A549 (cell line): ENCODE measurements at regions of chr12 and their contacts with region 1.

Region 1: GRCh38 chr12:10562306-10562933 is 51.0 kb downstream of the MAGOHB start:
- DNase-seq: peak; percentile 13 to 53
- ATAC-seq: 0 out of 6 replicates have a peak, but pooled peaks of 1 of the 2 experiments have one; percentile 33
- H3K4me3 ChIP-seq: no peak overlapping the region
- H3K27ac ChIP-seq: no peak overlapping the region
- H3K4me1 ChIP-seq: 0 out of 3 replicates have a peak, but pooled peaks cover 3% of the 10 kb centered on the region
- CTCF ChIP-seq: peak; percentile 92
- EP300 ChIP-seq: no peak
- POLR2A ChIP-seq: no peak
- RAD21 ChIP-seq: peak; percentile 89 to 91

Region 2: GRCh38 chr12:10235761-10236631 is 326.4 kb before region 1 on chr12:
- CTCF ChIA-PET with region 1: interaction called, 11 read pairs
- POLR2A ChIA-PET with region 1: no interaction called
- DNase-seq: peak; percentile 38 to 56
- ATAC-seq: peak; percentile 77 to 88; a peak in 5 of 6 replicates
- H3K4me3 ChIP-seq: no peak overlapping the region
- H3K27ac ChIP-seq: no peak overlapping the region
- H3K4me1 ChIP-seq: no peaks in the 10 kb centered on the region
- CTCF ChIP-seq: peak; percentile 90
- EP300 ChIP-seq: no peak
- POLR2A ChIP-seq: no peak
- RAD21 ChIP-seq: peak; percentile 89 to 93

Region 3: DNA sequence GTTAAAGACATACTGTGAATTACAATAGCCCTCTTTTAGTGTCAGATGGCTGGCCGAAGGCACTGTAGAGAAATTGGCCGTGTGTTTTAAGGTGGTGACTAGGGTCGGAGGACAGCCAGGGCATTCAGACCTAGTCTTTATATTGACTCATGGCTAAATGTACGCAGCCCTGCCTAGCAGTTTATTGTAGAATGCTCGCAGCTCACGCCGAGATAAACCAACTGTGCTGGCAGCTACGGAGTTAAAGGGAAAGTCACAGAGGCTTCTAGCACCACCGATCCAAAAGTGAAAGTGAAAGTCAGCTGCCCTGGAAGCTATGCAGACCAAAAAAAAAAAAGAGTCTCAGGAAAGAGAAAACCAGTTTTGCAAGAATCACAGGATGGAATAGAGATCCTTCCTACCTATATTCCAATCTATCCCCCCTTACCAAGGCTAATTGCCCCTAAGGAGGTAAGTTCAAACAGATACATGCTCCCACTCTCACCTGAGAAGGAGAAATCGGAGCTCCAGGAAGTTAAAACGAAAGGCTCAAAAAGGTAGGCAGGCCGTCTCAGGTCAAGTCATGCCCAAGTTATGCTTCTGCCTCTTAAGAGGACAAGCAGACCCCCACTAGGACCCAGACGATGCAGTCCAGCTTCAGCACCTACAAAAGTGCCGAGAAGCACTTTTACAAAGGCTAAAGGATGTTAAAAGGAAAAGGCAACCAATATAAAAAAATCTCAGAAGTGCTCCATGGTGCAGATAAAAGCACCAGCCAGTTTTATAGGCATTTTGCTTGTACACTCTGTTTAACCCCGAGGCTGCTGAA is 197.4 kb before region 1 on chr12:
- CTCF ChIA-PET with region 1: interaction called, 25 read pairs
- POLR2A ChIA-PET with region 1: interaction called, 3 read pairs
- DNase-seq: peak; percentile 35 to 53
- ATAC-seq: peak; percentile 68 to 78
- H3K4me3 ChIP-seq: peak overlapping the region; percentile 54
- H3K27ac ChIP-seq: peak overlapping the region; percentile 71 to 87
- H3K4me1 ChIP-seq: peaks cover 15% of the 10 kb centered on the region; the same call in 2 of the 3 replicates
- CTCF ChIP-seq: no peak
- EP300 ChIP-seq: no peak
- POLR2A ChIP-seq: no peak
- RAD21 ChIP-seq: no peak

Region 4: DNA sequence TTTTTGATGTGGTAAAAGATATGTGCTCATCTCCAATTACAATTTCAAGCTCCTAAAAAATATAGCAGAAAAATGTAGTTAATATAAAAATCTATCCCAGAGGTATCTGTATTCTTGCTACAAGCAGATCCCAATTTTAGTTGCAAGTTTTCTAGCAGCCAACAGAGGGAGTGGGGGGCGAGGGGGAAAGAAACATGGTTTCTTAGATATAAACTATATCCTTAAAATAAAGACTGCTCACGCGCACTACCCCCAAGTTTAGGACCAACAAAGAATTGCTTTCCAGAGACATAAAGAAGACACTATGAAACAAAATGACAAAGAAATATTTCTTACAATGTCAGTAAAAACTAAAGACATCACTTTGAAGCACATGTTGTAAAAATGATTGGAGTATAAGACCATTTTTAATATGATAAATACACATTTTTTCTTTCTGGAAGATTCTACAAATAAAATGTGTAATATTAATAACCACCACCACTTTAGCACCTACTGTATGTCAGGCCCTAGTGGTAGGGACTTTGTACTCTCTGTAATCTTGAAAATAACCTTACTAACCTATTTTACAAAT is 45.6 kb after region 1 on chr12:
- CTCF ChIA-PET with region 1: no interaction called
- POLR2A ChIA-PET with region 1: no interaction called
- DNase-seq: peak in 1 of 2 experiments; percentile 47
- ATAC-seq: peak in 1 of 2 experiments; percentile 65; a peak in 3 of 6 replicates
- H3K4me3 ChIP-seq: no peak overlapping the region
- H3K27ac ChIP-seq: no peak overlapping the region
- H3K4me1 ChIP-seq: peaks cover 7% of the 10 kb centered on the region; the same call in 2 of the 3 replicates
- CTCF ChIP-seq: peak; percentile 33; the same call in 2 of the 3 replicates
- EP300 ChIP-seq: no peak
- POLR2A ChIP-seq: no peak
- RAD21 ChIP-seq: peak; percentile 20 to 31; a peak in 1 of 5 replicates